A549 (cell line): ENCODE measurements at regions of chr1 and their contacts with region 1.

Region 1: GRCh38 chr1:27300341-27301051 is 21.5 kb upstream of the TMEM222 start:
- DNase-seq: peak; percentile 76 to 80
- ATAC-seq: peak; percentile 81 to 93
- H3K4me3 ChIP-seq: no peak overlapping the region
- H3K27ac ChIP-seq: peak overlapping the region; percentile 55 to 71; a peak in 5 of 6 replicates
- H3K4me1 ChIP-seq: peaks cover 23% of the 10 kb centered on the region
- CTCF ChIP-seq: peak; percentile 79
- EP300 ChIP-seq: no peak
- POLR2A ChIP-seq: no peak
- RAD21 ChIP-seq: peak; percentile 82 to 92

Region 2: DNA sequence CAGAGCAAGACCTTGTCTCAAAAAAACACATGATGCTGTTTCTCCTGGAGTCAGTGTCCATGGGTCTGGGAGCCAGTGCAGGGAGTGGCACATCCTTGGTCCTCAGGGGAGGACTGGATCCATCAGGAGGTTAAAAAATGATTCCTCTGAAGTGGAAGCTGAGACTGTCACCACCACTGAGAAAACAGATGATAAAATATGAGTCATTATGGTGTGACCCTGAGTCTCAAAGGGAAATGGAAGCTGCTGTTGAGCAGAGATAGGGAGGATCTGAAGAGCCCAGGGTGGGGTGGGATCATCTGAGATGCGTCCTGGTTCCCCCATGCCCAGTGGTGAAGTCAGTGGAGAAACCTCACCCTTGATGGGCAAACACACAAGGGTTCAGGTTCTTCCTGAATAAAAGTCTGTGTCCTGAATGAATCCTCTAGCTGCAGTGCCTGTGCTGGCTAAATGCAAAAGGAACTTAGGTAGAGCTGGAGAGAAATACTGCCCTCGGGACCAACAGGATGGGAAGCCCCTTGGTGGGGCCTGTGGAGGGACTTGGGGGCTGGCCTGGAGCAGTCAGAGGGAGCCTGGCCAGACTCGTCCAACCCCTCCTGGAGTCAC is 226.2 kb before region 1 on chr1:
- CTCF ChIA-PET with region 1: no interaction called
- POLR2A ChIA-PET with region 1: no interaction called
- DNase-seq: peak; percentile 19 to 49
- ATAC-seq: peak; percentile 49 to 55; a peak in 4 of 6 replicates
- H3K4me3 ChIP-seq: no peak overlapping the region
- H3K27ac ChIP-seq: peak overlapping the region; percentile 44 to 71; a peak in 4 of 6 replicates
- H3K4me1 ChIP-seq: peaks cover 12% of the 10 kb centered on the region
- CTCF ChIP-seq: no peak
- EP300 ChIP-seq: no peak
- POLR2A ChIP-seq: no peak
- RAD21 ChIP-seq: no peak

Region 3: GRCh38 chr1:27097484-27097917 is 203.0 kb before region 1 on chr1:
- CTCF ChIA-PET with region 1: interaction called, 136 read pairs
- POLR2A ChIA-PET with region 1: no interaction called
- DNase-seq: peak; percentile 71
- ATAC-seq: peak; percentile 68 to 83; a peak in 5 of 6 replicates
- H3K4me3 ChIP-seq: no peak overlapping the region
- H3K27ac ChIP-seq: 0 out of 6 replicates have a peak overlapping the region, but pooled peaks of 1 of the 2 experiments have one; percentile 43
- H3K4me1 ChIP-seq: peaks cover 32% of the 10 kb centered on the region
- CTCF ChIP-seq: peak; percentile 79
- EP300 ChIP-seq: no peak
- POLR2A ChIP-seq: no peak
- RAD21 ChIP-seq: peak; percentile 86 to 88

Region 4: GRCh38 chr1:27284425-27285273 is 15.8 kb before region 1 on chr1:
- CTCF ChIA-PET with region 1: interaction called, 48 read pairs
- POLR2A ChIA-PET with region 1: no interaction called
- DNase-seq: peak; percentile 73 to 84
- ATAC-seq: peak; percentile 93 to 95
- H3K4me3 ChIP-seq: no peak overlapping the region
- H3K27ac ChIP-seq: no peak overlapping the region
- H3K4me1 ChIP-seq: no peaks in the 10 kb centered on the region
- CTCF ChIP-seq: peak; percentile 78
- EP300 ChIP-seq: no peak
- POLR2A ChIP-seq: no peak
- RAD21 ChIP-seq: peak; percentile 73 to 76

Region 5: DNA sequence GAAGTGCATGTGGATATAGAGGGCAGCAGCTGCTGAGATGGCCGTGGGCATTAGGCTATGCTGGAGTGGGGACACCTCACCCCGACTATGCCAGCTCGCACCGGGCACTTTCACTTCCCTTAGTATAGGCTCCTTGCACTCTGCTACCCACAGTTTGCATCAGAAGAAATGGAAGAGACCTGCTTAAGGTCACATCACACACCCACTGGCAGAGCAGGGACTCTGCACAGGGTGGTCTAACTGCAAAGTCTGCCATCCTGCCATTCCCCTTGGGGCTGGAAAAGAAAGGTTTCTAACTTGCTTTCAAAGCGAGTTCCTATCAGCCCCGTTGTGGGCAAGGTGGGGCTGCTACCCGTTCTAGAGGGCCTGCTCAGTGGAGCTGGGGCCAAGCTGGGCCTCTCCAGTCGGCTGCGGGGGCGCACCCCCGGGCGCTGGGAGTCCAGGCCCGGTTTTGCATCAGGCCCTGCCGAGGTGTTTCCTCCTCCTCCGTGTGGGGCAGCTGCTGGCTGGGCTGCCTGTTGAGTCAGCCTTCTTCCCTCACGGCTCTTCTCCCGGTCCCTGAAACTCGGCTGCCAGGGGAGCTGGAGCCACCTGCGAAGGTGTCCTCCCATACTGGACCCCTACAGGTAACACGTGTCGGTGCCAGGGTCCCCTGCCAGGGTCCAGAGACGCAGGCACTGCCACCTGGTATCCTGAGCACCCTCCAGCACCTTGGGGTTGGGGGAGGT is 41.2 kb after region 1 on chr1 and contains the start of gene SYTL1:
- CTCF ChIA-PET with region 1: interaction called, 21 read pairs
- POLR2A ChIA-PET with region 1: no interaction called
- DNase-seq: peak; percentile 38 to 56
- ATAC-seq: peak; percentile 81 to 84
- H3K4me3 ChIP-seq: peak within 1 kb of the TSS; percentile 19; the same call in 2 of the 3 replicates
- H3K27ac ChIP-seq: peak within 1 kb of the TSS; percentile 57 to 80
- H3K4me1 ChIP-seq: peaks cover 18% of the 10 kb centered on the region
- CTCF ChIP-seq: no peak
- EP300 ChIP-seq: no peak
- POLR2A ChIP-seq: no peak
- RAD21 ChIP-seq: no peak
- polyA plus RNA-seq, gene SYTL1: 0.50 and 0.80 TPM in 2 replicates

Region 6: GRCh38 chr1:27392096-27392777 is 91.7 kb after region 1 on chr1 and contains the start of gene GPR3:
- CTCF ChIA-PET with region 1: interaction called, 215 read pairs
- POLR2A ChIA-PET with region 1: interaction called, 3 read pairs
- DNase-seq: peak; percentile 81 to 88
- ATAC-seq: peak; percentile 74 to 85
- H3K4me3 ChIP-seq: peak within 1 kb of the TSS; percentile 70
- H3K27ac ChIP-seq: peak within 1 kb of the TSS; percentile 74 to 89
- H3K4me1 ChIP-seq: peaks cover 17% of the 10 kb centered on the region
- CTCF ChIP-seq: peak; percentile 50
- EP300 ChIP-seq: no peak
- POLR2A ChIP-seq: no peak
- RAD21 ChIP-seq: peak; percentile 12 to 33; a peak in 2 of 5 replicates
- polyA plus RNA-seq, gene GPR3: 1.3 and 1.7 TPM in 2 replicates

Region 7: DNA sequence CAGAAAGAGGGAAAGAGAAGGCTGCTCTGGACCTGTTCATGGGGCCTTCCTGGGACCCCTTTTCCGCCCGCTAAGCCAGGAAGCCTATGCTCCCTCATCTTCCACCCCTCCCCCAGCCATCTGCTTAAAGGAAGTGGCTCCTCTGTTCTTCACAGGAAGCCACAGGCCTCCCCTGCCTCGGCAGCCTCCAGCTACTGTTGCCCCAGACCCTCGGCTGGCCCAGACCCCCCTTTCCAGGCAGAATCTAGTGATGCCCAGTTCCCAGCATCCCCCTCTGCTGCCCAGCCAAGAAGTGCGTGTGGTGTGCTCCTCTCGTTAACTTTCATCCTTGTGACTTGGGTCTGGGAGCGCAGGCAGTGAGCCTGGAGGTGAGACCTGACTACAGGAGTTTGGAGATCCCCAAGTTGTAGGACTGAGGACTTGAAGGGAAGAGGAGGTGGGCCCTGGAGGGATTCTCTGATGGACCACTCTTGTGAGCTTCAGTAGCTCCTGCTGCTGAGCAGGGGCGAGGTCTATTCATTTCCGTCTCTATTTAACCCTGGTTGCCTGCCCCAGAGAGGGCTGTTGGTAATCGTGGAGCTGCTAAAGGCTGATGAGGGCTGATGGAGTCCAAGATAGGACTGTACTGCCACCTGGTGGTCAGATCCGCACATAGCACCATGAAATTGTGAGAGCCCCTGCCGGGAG is 362.4 kb after region 1 on chr1:
- CTCF ChIA-PET with region 1: interaction called, 13 read pairs
- POLR2A ChIA-PET with region 1: no interaction called
- DNase-seq: peak; percentile 68 to 71
- ATAC-seq: peak; percentile 62 to 80
- H3K4me3 ChIP-seq: no peak overlapping the region
- H3K27ac ChIP-seq: peak overlapping the region; percentile 38 to 72; a peak in 4 of 6 replicates
- H3K4me1 ChIP-seq: peaks cover 9% of the 10 kb centered on the region; the same call in 1 of the 3 replicates
- CTCF ChIP-seq: peak; percentile 80
- EP300 ChIP-seq: no peak
- POLR2A ChIP-seq: no peak
- RAD21 ChIP-seq: peak; percentile 81 to 83